Left ventricle myocardium superior (tissue), 1 donor: ENCODE measurements at regions of chr1 and their contacts with region 1.

Region 1: GRCh38 chr1:72037745-72038343 is 244.5 kb downstream of the NEGR1 start:
- DNase-seq: no peak
- ATAC-seq: no peak

Region 2: GRCh38 chr1:71587961-71588360 is 449.9 kb before region 1 on chr1:
- intact Hi-C with region 1: loop called (anchors 5 kb)
- DNase-seq: no peak
- ATAC-seq: peak; percentile 57